ENCODE measurements at regions of chr13 and their contacts with region 1.

Region 1: GRCh38 chr13:43324129-43324528 is 300.7 kb downstream of the DNAJC15 start:
- DNase-seq: no peak
- H3K4me3 ChIP-seq: no peak overlapping the region
- H3K27ac ChIP-seq: no peak overlapping the region
- H3K4me1 ChIP-seq: no peaks in the 10 kb centered on the region
- H3K27me3 ChIP-seq: no peaks in the 10 kb centered on the region
- CTCF ChIP-seq: no peak
- POLR2A ChIP-seq: no peak

Region 2: DNA sequence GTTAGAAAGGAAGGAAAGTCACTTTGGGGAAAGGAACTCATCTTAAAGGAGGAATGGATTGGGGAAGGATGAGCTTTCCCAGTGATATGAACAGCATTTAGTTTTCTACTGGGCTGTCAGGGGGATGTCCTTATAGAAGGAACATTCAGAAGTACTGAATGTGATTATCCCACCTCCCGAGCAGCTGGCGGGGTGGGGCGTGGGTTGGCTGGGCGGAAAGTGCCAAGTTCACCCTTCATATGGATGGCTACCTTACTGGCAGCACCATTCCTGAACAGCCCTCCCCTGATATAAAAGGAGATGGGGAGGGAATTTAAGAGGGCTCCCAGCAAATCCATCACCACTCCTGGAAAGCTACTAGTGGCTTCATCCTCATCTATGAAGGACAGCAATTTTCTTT is 110.0 kb before region 1 on chr13:
- intact Hi-C with region 1: no loop called
- DNase-seq: peak in 1 of 2 donors; percentile 31
- H3K4me3 ChIP-seq: no peak overlapping the region
- H3K27ac ChIP-seq: no peak overlapping the region
- H3K4me1 ChIP-seq: no peaks in the 10 kb centered on the region
- H3K27me3 ChIP-seq: no peaks in the 10 kb centered on the region
- CTCF ChIP-seq: no peak
- POLR2A ChIP-seq: no peak

Region 3: GRCh38 chr13:43343620-43344019 is 19.5 kb after region 1 on chr13:
- intact Hi-C with region 1: loop called (anchors 1 kb)
- DNase-seq: no peak
- H3K4me3 ChIP-seq: no peak overlapping the region
- H3K27ac ChIP-seq: no peak overlapping the region
- H3K4me1 ChIP-seq: peaks cover 4% of the 10 kb centered on the region
- H3K27me3 ChIP-seq: no peaks in the 10 kb centered on the region
- CTCF ChIP-seq: no peak
- POLR2A ChIP-seq: no peak